HCT116 (cell line): ENCODE measurements at regions of chr11 and their contacts with region 1.

Region 1: GRCh38 chr11:95968585-95968984 is 44.7 kb upstream of the MTMR2 start:
- DNase-seq: no peak
- ATAC-seq: no peak
- H3K4me3 ChIP-seq: no peak overlapping the region
- H3K27ac ChIP-seq: no peak overlapping the region
- H3K4me1 ChIP-seq: no peaks in the 10 kb centered on the region
- H3K27me3 ChIP-seq: no peaks in the 10 kb centered on the region
- CTCF ChIP-seq: peak in 2 of 3 experiments; percentile 40 to 45; a peak in 4 of 6 replicates
- POLR2A ChIP-seq: no peak
- RAD21 ChIP-seq: peak; percentile 44

Region 2: DNA sequence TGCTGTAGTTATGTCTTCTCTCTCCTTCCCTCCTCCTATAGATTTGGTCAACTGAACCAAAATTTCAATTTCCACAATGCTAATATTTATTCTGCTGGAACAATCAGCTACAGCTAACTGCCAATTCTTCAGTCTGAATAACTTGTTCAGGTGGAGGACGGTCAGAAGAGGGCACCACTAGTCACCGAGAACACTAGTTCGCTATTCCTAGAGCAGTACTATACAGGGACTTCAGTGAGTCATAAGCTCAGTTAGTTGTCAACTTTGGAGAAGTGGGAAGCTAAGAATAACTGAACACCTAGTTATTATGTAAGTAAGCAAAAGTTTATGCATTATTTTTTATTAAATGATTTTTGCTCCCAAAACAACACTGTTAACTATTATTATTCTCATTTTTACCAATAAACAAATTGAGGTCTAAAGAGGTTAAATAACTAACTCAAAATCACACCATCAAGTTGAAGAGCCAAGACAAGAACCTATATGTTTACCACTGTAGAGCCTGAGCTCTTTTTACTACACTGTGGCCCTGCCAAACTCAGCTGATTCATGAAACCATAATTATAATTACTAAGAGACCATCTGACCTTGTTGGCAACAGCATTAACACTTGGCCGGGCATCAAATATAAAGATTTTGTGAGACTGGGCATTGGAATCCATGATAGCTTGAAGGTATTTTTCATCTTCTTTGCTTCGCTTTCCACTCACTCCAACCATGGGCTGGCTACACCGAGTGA is 119.3 kb before region 1 on chr11:
- CTCF ChIA-PET with region 1: interaction called, 3 read pairs
- POLR2A ChIA-PET with region 1: no interaction called
- RAD21 ChIA-PET with region 1: no interaction called
- intact Hi-C with region 1: loop called (anchors 1 kb)
- DNase-seq: peak; percentile 32
- ATAC-seq: peak; percentile 88
- H3K4me3 ChIP-seq: no peak overlapping the region
- H3K27ac ChIP-seq: no peak overlapping the region
- H3K4me1 ChIP-seq: no peaks in the 10 kb centered on the region
- H3K27me3 ChIP-seq: no peaks in the 10 kb centered on the region
- CTCF ChIP-seq: peak; percentile 39 to 60 (median 45); a peak in 5 of 6 replicates
- POLR2A ChIP-seq: no peak
- RAD21 ChIP-seq: peak; percentile 65